CD8-positive, alpha-beta T cell (primary cell): ENCODE measurements at regions of chr18 and their contacts with region 1.

Region 1: DNA sequence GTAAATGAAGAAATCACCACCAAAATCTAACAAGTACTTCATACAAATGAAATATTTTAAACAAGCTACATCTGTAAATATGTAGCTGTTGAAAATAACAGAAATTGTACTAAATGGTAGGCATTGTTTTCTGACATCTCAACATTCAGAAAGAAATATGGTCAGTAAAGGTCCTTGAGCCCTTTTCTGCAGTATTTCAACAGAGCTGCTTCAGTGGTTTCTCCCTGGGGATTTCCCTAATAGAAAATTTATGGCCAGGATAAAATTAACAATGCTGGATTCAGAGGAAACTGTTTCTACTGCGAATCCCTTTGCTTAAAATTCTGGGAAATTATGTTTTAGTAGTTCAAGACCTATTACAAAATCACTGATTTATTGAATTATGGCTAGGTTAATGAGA is 256.6 kb downstream of the PIEZO2 start:
- DNase-seq: no peak
- ATAC-seq: no peak
- H3K4me3 ChIP-seq: no peak overlapping the region
- H3K4me3 Mint-ChIP-seq: no peak overlapping the region
- H3K27ac ChIP-seq: no peak overlapping the region
- H3K27ac Mint-ChIP-seq: no peak overlapping the region
- H3K4me1 ChIP-seq: no peaks in the 10 kb centered on the region
- H3K4me1 Mint-ChIP-seq: peaks cover 2% of the 10 kb centered on the region
- H3K27me3 ChIP-seq: no peaks in the 10 kb centered on the region
- H3K27me3 Mint-ChIP-seq: peaks cover 2% of the 10 kb centered on the region
- CTCF ChIP-seq: no peak

Region 2: DNA sequence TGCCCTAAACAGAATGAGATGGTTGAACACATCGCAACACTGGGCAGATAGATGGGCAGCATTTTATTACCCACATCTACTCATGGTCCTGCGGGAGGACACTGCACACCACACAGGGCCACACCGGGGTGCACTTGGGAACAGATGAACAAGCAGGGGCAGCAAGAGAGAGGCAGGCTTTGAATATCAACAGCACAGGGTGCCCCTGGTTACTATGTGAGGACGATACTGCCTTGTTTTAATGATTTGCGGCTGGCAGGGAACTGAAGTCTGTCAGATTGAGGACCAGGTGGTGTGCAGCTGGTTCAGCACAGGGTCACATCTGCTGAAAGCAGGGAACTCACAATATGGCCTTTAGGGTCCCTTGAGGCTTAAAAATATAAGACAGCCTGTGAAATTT is 60.9 kb after region 1 on chr18:
- CTCF ChIA-PET with region 1: no interaction called
- POLR2A ChIA-PET with region 1: no interaction called
- intact Hi-C with region 1: loop called in 1 of 2 experiments (anchors 10 kb)
- DNase-seq: no peak
- ATAC-seq: no peak
- H3K4me3 ChIP-seq: no peak overlapping the region
- H3K4me3 Mint-ChIP-seq: no peak overlapping the region
- H3K27ac ChIP-seq: no peak overlapping the region
- H3K27ac Mint-ChIP-seq: no peak overlapping the region
- H3K4me1 ChIP-seq: no peaks in the 10 kb centered on the region
- H3K4me1 Mint-ChIP-seq: no peaks in the 10 kb centered on the region
- H3K27me3 ChIP-seq: no peaks in the 10 kb centered on the region
- H3K27me3 Mint-ChIP-seq: no peaks in the 10 kb centered on the region
- CTCF ChIP-seq: no peak